Thyroid gland (tissue), 4 donors: ENCODE measurements at regions of chr2 and their contacts with region 1.

Region 1: DNA sequence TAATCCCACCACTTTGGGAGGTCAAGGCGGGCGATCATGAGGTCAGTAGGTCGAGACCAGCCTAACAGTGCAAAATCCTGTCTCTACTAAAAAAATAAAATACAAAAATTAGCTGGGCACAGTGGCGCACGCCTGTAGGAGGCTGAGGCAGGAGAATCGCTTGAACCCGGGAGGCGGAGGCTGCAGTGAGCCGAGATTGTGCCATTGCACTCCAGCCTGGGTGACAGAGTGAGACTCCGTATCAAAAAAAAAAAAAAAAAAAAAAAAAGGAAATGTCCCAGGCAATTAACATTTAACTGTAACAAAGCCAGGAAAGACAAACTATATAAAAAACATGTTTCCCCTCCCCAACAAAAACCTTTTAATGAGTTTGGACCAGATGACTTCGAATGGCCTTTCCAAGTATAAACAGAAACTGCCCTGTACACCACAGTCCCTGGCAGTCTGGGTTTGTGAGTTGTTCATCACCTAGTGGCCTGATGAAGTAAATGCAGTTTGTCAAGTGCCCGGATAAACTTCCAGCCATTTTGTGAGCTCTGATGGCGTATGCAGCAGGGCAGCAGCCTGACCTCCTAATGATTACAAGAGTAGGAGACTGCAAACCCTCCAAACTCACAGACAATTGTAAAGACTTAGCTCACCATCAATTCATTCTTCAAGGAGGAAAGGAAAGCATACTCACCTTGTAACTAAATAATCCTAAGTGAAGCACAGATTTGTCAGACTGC is 16.6 kb upstream of the PCBP1 start:
- DNase-seq: peak; percentile 63 to 71
- H3K4me3 ChIP-seq: no peak overlapping the region
- H3K27ac ChIP-seq: peak overlapping the region; percentile 75 to 92 (median 92)
- H3K4me1 ChIP-seq: peaks cover 23 to 52% of the 10 kb centered on the region in 2 donors
- H3K27me3 ChIP-seq: no peaks in the 10 kb centered on the region
- CTCF ChIP-seq: peak; percentile 57 to 92 (median 84)
- POLR2A ChIP-seq: peak in 1 of 2 donors; percentile 16

Region 2: GRCh38 chr2:69345434-69345833 is 725.3 kb before region 1 on chr2:
- intact Hi-C with region 1: no loop called
- DNase-seq: no peak
- H3K4me3 ChIP-seq: no peak overlapping the region
- H3K27ac ChIP-seq: no peak overlapping the region
- H3K4me1 ChIP-seq: no peaks in the 10 kb centered on the region
- H3K27me3 ChIP-seq: no peaks in the 10 kb centered on the region
- CTCF ChIP-seq: no peak
- POLR2A ChIP-seq: no peak

Region 3: GRCh38 chr2:69933839-69934613 is 136.7 kb before region 1 on chr2:
- intact Hi-C with region 1: loop called (anchors 10 kb)
- DNase-seq: no peak
- H3K4me3 ChIP-seq: no peak overlapping the region
- H3K27ac ChIP-seq: no peak overlapping the region
- H3K4me1 ChIP-seq: peaks cover 4 to 9% of the 10 kb centered on the region in 2 donors
- H3K27me3 ChIP-seq: no peaks in the 10 kb centered on the region
- CTCF ChIP-seq: no peak
- POLR2A ChIP-seq: no peak